ENCODE measurements at regions of chr5 and their contacts with region 1.

Region 1: GRCh38 chr5:148314204-148314603 is 2.0 kb downstream of the SPINK7 start:
- DNase-seq: peak; percentile 46
- H3K4me3 ChIP-seq: no peak overlapping the region
- H3K27ac ChIP-seq: no peak overlapping the region
- H3K4me1 ChIP-seq: no peaks in the 10 kb centered on the region
- H3K27me3 ChIP-seq: no peaks in the 10 kb centered on the region
- CTCF ChIP-seq: peak in 1 of 2 donors; percentile 50

Region 2: GRCh38 chr5:148335259-148335658 is 21.1 kb after region 1 on chr5 and contains the start of gene SPINK9:
- CTCF ChIA-PET with region 1: no interaction called
- dilution Hi-C with region 1: no loop called
- in situ Hi-C with region 1: no loop called
- intact Hi-C with region 1: loop called (anchors 2 kb)
- DNase-seq: no peak
- H3K4me3 ChIP-seq: no peak within 1 kb of the TSS
- H3K27ac ChIP-seq: peak within 1 kb of the TSS; percentile 69
- H3K4me1 ChIP-seq: peaks cover 9% of the 10 kb centered on the region
- H3K27me3 ChIP-seq: no peaks in the 10 kb centered on the region
- CTCF ChIP-seq: no peak
- total RNA-seq, gene SPINK9: not detected

Region 3: GRCh38 chr5:148353634-148354033 is 39.4 kb after region 1 on chr5:
- CTCF ChIA-PET with region 1: no interaction called
- dilution Hi-C with region 1: no loop called
- in situ Hi-C with region 1: no loop called
- intact Hi-C with region 1: loop called (anchors 1 kb)
- DNase-seq: no peak
- H3K4me3 ChIP-seq: no peak overlapping the region
- H3K27ac ChIP-seq: no peak overlapping the region
- H3K4me1 ChIP-seq: no peaks in the 10 kb centered on the region
- H3K27me3 ChIP-seq: no peaks in the 10 kb centered on the region
- CTCF ChIP-seq: peak in 1 of 2 donors; percentile 34

Region 4: GRCh38 chr5:148374692-148375360 is 60.6 kb after region 1 on chr5:
- CTCF ChIA-PET with region 1: no interaction called
- dilution Hi-C with region 1: no loop called
- in situ Hi-C with region 1: no loop called
- intact Hi-C with region 1: loop called (anchors 1 kb)
- DNase-seq: peak; percentile 67
- H3K4me3 ChIP-seq: no peak overlapping the region
- H3K27ac ChIP-seq: no peak overlapping the region
- H3K4me1 ChIP-seq: peaks cover 4% of the 10 kb centered on the region
- H3K27me3 ChIP-seq: no peaks in the 10 kb centered on the region
- CTCF ChIP-seq: peak; percentile 95 to 97

Region 5: DNA sequence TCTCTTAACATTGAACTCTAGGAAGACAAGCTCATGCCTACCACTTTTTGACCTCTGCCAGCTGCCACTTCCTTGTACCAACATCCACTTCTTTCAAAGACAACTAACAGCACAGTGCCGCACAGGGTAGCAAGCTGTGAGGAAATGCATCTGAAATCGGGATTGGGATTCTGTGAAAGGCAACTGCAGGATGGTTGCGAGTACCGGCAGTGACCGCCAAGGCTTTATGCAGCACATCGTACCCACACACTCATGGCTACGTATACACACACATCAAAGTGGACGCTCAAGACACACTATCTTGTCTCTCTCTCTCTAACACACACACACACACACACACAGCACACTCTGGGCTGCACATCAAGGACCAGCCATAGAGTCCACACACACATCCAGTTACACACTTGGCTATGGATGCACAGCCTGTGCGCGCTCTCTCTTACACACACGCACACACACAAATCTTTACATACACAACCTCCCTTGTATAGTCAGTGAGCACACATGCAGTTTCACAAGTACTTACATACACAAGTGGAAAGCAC is 339.2 kb after region 1 on chr5:
- CTCF ChIA-PET with region 1: no interaction called
- dilution Hi-C with region 1: no loop called
- in situ Hi-C with region 1: no loop called
- intact Hi-C with region 1: no loop called
- DNase-seq: no peak
- H3K4me3 ChIP-seq: no peak overlapping the region
- H3K27ac ChIP-seq: no peak overlapping the region
- H3K4me1 ChIP-seq: no peaks in the 10 kb centered on the region
- H3K27me3 ChIP-seq: peaks cover 25% of the 10 kb centered on the region
- CTCF ChIP-seq: no peak

Region 6: DNA sequence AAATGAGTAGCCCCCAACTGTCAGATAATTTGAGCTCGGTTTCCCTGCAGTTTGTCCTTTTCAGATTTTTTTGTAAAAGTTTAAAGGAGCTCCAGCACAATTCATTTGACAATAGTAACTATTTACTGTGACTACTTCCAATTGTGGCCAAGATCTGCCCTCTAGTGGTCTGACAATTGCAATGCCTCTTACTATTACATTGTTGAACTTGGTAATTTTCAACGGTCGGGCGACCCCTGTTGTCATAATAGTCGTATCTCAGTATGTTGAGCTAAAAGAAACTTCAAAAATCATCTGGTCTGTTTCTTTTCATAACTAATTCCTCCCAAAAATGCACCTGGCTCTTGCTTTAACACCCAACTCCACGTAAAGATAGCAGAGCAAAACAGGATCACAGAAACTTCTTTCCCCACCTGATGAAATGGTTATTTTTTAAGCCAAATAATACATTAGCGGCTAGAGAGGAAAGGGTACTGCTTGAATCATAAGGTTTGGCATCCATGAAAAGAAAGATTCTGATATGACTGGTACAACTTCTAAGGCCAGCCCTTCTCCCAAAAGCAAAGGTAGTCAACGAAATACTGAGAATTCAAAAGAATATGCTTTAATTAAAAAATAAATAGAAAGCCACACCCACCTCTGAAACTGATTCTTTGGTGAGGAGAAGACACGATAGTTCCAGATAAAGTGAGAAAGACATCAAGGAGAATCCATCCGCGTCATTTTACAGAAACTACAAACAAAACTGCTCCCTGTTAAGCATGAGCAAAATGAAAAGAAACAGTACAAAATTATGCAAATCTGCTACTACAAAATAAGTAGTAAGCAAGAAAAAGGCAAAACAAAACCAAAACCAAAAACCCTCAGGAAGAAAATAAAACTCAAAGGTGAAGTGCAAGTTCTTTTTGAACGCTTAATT is 417.0 kb after region 1 on chr5:
- CTCF ChIA-PET with region 1: interaction called, 5 read pairs
- dilution Hi-C with region 1: no loop called
- in situ Hi-C with region 1: no loop called
- intact Hi-C with region 1: loop called (anchors 1 kb)
- DNase-seq: peak; percentile 64
- H3K4me3 ChIP-seq: peak overlapping the region in 1 of 3 experiments; percentile 4
- H3K27ac ChIP-seq: no peak overlapping the region
- H3K4me1 ChIP-seq: peaks cover 6% of the 10 kb centered on the region
- H3K27me3 ChIP-seq: no peaks in the 10 kb centered on the region
- CTCF ChIP-seq: peak; percentile 76 to 98

Measured in mammary epithelial cell (primary cell).